Ascending aorta (tissue), 2 donors: ENCODE measurements at regions of chr9 and their contacts with region 1.

Region 1: GRCh38 chr9:95510709-95511615 is 5.8 kb downstream of the PTCH1 start:
- DNase-seq: peak; percentile 70 to 96
- H3K4me3 ChIP-seq: peak overlapping the region; percentile 85 to 86
- H3K27ac ChIP-seq: peak overlapping the region; percentile 78 to 87
- H3K4me1 ChIP-seq: peaks cover 6 to 13% of the 10 kb centered on the region in 2 donors
- H3K27me3 ChIP-seq: no peaks in the 10 kb centered on the region
- CTCF ChIP-seq: no peak

Region 2: DNA sequence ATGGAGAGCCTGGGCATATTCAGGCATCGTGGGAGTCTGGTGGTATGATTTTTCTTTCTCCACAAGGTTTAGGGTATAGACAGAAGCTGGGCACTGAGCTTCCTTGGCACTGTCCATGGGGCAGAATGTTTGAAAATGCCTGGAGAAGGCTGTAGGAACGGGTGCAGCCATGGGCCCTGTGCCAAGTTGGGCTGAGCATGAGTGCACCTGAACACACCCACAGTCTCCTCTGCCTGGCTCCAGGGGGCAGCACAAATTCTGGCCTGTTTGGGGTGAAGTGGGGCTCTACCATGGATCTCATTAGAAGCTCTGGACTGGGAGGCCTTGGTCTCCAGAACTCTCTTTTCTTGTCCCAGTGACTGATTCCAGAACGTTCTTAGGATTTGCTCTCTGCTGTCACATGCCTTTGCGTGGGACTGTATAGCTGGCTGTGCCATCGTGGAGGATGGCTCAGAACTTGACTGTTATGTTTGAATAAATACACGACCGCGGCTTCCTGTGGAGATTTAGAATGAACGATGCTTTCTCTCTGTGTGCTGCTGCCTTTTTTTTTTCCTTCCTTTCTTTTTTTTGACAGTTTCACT is 423.2 kb before region 1 on chr9:
- intact Hi-C with region 1: loop called (anchors 5 kb)
- DNase-seq: no peak
- H3K4me3 ChIP-seq: peak overlapping the region in 1 of 2 donors; percentile 1
- H3K27ac ChIP-seq: peak overlapping the region; percentile 94 to 95
- H3K4me1 ChIP-seq: peaks cover 51 to 83% of the 10 kb centered on the region in 2 donors
- H3K27me3 ChIP-seq: no peaks in the 10 kb centered on the region
- CTCF ChIP-seq: peak in 1 of 3 experiments; percentile 12

Region 3: GRCh38 chr9:95793924-95794828 is 283.2 kb after region 1 on chr9:
- intact Hi-C with region 1: loop called (anchors 10 kb)
- DNase-seq: no peak
- H3K4me3 ChIP-seq: no peak overlapping the region
- H3K27ac ChIP-seq: peak overlapping the region in 1 of 2 donors; percentile 2
- H3K4me1 ChIP-seq: peaks cover 4 to 8% of the 10 kb centered on the region in 2 donors
- H3K27me3 ChIP-seq: no peaks in the 10 kb centered on the region
- CTCF ChIP-seq: no peak

Region 4: DNA sequence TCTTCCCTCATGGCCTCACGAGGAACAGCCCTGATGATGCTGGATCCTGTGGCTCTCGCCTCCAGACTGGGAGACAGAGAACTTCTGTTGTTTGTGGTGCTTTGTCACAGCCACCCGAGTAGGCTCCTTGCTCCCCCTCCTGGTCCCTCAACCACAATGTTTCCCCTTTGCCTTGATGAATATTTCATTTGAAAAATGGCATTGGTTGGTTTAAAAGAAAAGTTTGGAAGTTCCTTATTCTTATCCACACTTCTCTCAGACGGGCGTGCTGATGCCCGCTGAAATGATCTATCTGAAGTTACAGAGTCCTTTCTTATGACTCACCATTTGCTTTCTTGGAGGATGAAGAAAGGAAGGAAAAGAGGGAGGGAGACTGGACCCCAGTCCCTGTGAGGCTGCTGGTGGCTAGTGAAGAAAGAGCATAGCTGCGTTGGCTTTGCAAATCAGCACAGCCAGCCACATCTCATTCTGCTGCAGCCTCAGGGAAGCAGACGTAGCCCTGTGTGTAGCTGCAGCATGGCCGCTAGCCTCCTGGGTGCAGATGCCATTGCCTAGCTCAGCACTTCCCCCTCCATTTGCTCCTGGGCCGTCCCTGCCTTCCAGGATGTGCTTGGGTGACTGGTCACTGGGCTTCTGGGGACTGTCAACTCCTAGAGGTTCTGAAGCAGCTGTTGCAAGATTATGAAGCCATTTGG is 550.5 kb after region 1 on chr9:
- intact Hi-C with region 1: loop called (anchors 10 kb)
- DNase-seq: peak in 1 of 2 donors; percentile 76
- H3K4me3 ChIP-seq: no peak overlapping the region
- H3K27ac ChIP-seq: peak overlapping the region; percentile 22 to 44
- H3K4me1 ChIP-seq: peaks cover 0 to 9% of the 10 kb centered on the region in 2 donors
- H3K27me3 ChIP-seq: no peaks in the 10 kb centered on the region
- CTCF ChIP-seq: peak; percentile 36 to 54 (median 37)

Region 5: DNA sequence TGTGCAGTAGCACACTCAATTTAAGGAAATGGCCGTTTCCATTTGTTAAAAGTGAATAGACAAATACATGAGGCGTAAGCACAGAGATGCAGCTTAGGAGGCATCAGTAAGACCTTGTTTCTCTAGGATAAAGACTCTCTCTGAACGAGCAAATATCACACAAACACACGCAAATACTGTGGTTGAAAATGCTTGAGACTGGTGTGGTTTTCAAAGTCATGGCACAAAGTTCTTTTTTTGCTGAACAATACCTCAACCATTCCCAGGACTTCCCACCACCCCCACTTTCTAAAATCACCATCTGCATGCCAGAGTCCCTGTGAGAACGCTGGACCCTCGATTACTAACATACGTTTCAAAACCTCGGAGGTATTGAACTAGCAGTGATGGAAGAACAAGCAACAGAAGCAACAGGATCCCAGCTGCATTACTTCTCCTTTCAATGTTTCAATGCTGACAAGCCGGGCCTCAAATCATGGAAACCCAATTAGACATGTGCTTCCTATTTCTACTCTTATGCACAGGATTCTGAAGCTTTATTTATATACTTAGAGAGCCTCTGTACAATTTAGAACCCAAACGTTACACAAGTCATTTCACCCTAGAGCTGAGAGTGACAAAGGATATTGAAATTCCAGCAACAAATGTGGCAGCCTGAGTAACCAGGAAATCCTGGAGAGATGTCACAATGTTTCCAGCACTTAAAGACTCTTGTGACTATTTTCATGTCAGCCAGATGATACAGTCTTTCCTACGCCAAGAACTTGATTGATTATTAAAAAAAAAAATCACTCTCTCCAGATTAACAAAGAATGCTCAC is 1044.8 kb after region 1 on chr9:
- intact Hi-C with region 1: loop called (anchors 10 kb)
- DNase-seq: no peak
- H3K4me3 ChIP-seq: peak overlapping the region in 1 of 2 donors; percentile 35
- H3K27ac ChIP-seq: peak overlapping the region; percentile 92 to 96
- H3K4me1 ChIP-seq: peaks cover 10 to 57% of the 10 kb centered on the region in 2 donors
- H3K27me3 ChIP-seq: no peaks in the 10 kb centered on the region
- CTCF ChIP-seq: no peak